ENCODE measurements at regions of chr9 and their contacts with region 1.

Region 1: GRCh38 chr9:21317956-21318923 is 13.1 kb upstream of the IFNA5 start:
- DNase-seq: peak; percentile 48
- ATAC-seq: peak; percentile 64
- H3K4me3 ChIP-seq: no peak overlapping the region
- H3K4me3 Mint-ChIP-seq: no peak overlapping the region
- H3K27ac ChIP-seq: no peak overlapping the region
- H3K27ac Mint-ChIP-seq: no peak overlapping the region
- H3K4me1 ChIP-seq: no peaks in the 10 kb centered on the region
- H3K4me1 Mint-ChIP-seq: peaks cover 4% of the 10 kb centered on the region
- H3K27me3 ChIP-seq: no peaks in the 10 kb centered on the region
- H3K27me3 Mint-ChIP-seq: peaks cover 9% of the 10 kb centered on the region
- CTCF ChIP-seq: peak; percentile 83

Region 2: DNA sequence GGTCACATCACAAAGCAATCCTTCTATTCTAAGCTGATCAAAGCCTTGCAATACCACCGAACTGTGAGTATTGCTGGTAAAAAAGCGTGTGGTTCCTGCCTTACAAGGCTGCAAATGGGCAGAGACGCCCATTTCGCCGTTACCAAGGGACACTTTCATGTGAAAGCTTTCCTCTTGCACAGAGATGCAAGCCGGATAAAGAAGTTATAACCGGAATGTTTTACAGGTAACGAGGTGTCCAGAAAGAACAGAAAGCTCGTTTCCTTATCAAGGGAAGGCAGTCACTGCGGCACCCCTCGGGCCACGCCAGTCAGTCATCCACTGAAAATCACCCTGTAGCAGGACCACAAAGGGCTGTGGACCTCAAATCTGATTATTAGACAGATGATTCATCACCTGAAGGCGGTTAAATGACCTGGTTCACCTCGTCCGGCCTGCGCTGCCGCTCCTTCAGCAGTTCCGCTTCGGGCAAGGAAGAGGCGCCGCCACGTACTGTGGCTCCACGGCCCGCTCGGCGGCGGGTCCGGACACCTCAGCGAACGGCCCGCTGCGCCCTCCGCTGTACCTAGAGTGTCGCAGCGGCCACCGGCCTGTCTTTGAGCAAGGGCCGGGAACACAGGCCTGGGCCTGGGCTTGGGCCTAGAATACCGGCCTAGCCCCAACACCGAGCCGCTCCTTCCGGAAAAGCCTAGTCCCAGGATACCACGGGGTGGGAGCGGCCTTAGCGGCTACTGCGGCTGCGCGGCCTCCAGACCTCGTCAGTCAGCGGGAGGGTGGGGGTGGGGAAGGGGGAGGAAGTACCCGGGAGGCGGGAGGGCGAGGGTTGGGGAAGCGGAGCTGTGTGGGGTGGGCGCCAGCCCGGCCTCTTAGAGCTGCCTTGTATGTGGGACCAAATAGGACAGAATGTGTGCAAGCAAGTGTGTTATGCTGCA is 16.7 kb after region 1 on chr9 and contains the start of gene KLHL9:
- CTCF ChIA-PET with region 1: interaction called, 15 read pairs
- POLR2A ChIA-PET with region 1: no interaction called
- intact Hi-C with region 1: loop called (anchors 2 kb)
- DNase-seq: peak; percentile 93
- ATAC-seq: peak; percentile 89
- H3K4me3 ChIP-seq: peak within 1 kb of the TSS; percentile 83 to 97 (median 89)
- H3K4me3 Mint-ChIP-seq: peak within 1 kb of the TSS; percentile 95
- H3K27ac ChIP-seq: peak within 1 kb of the TSS; percentile 90
- H3K27ac Mint-ChIP-seq: peak within 1 kb of the TSS; percentile 92
- H3K4me1 ChIP-seq: peaks cover 18 to 27% of the 10 kb centered on the region in 2 donors
- H3K4me1 Mint-ChIP-seq: peaks cover 49% of the 10 kb centered on the region
- H3K27me3 ChIP-seq: peaks cover 0 to 6% (median under 1%) of the 10 kb centered on the region in 4 experiments
- H3K27me3 Mint-ChIP-seq: peaks cover 12% of the 10 kb centered on the region
- CTCF ChIP-seq: no peak
- total RNA-seq, gene KLHL9: 17.5 and 17.6 TPM in 2 replicates

Measured in B cell (primary cell).